ENCODE measurements at regions of chr2 and their contacts with region 1.

Region 1: GRCh38 chr2:230762317-230762896 is 49.8 kb downstream of the CAB39 start:
- DNase-seq: peak; percentile 54
- ATAC-seq: peak; percentile 99
- H3K4me3 Mint-ChIP-seq: no peak overlapping the region
- H3K27ac Mint-ChIP-seq: peak overlapping the region; percentile 24; the same call in 1 of the 2 replicates
- H3K4me1 Mint-ChIP-seq: peaks cover 36% of the 10 kb centered on the region
- H3K27me3 Mint-ChIP-seq: no peaks in the 10 kb centered on the region
- CTCF ChIP-seq: no peak; the same call in 1 of the 2 replicates

Region 2: DNA sequence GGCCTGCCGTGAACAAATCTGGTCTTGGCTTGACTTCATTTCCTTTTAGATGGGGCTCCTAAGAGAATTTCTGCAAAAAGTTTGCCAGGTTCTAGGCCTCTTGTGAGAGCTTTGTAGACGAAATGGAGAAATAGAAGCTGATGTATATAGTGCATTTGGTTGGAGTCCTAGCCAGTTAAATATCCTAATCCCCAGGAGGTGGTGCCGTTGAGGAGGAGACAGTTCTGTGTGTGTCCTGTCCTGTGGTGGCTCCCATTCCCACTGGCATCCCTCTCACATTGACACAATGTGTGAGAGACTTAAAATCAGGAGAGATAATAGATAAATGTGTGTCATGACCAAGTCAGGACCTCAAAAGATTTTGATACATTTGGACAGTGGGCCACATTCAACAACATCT is 1013.5 kb before region 1 on chr2:
- CTCF ChIA-PET with region 1: no interaction called
- POLR2A ChIA-PET with region 1: interaction called, 10 read pairs
- DNase-seq: no peak
- ATAC-seq: peak; percentile 82
- H3K4me3 Mint-ChIP-seq: no peak overlapping the region
- H3K27ac Mint-ChIP-seq: no peak overlapping the region
- H3K4me1 Mint-ChIP-seq: peaks cover 12% of the 10 kb centered on the region
- H3K27me3 Mint-ChIP-seq: no peaks in the 10 kb centered on the region
- CTCF ChIP-seq: no peak

Measured in WTC11 (cell line).